ENCODE measurements at regions of chr7 and their contacts with region 1.

Region 1: GRCh38 chr7:18958627-18959026 is 158.8 kb downstream of the TWIST1 start:
- DNase-seq: no peak
- ATAC-seq: no peak
- H3K4me3 ChIP-seq: no peak overlapping the region
- H3K27ac ChIP-seq: peak overlapping the region in 1 of 2 donors; percentile 36
- H3K4me1 ChIP-seq: peaks cover 5% of the 10 kb centered on the region in 2 donors
- H3K27me3 ChIP-seq: no peaks in the 10 kb centered on the region

Region 2: GRCh38 chr7:19024261-19024660 is 65.6 kb after region 1 on chr7:
- intact Hi-C with region 1: loop called in 1 of 2 experiments (anchors 2 kb)
- DNase-seq: no peak
- ATAC-seq: no peak
- H3K4me3 ChIP-seq: no peak overlapping the region
- H3K27ac ChIP-seq: peak overlapping the region in 1 of 2 donors; percentile 3
- H3K4me1 ChIP-seq: peaks cover 0 to 1% of the 10 kb centered on the region in 2 donors
- H3K27me3 ChIP-seq: no peaks in the 10 kb centered on the region

Measured in aorta (tissue), 5 donors.